ENCODE measurements at regions of chr17 and their contacts with region 1.

Region 1: GRCh38 chr17:34637548-34638525 is 58.5 kb downstream of the TMEM132E start:
- DNase-seq: peak; percentile 71 to 79
- H3K4me3 ChIP-seq: peak overlapping the region in 1 of 3 donors; percentile 7
- H3K27ac ChIP-seq: no peak overlapping the region
- H3K4me1 ChIP-seq: peaks cover 0 to 6% of the 10 kb centered on the region in 2 donors
- H3K27me3 ChIP-seq: peaks cover 9% of the 10 kb centered on the region
- CTCF ChIP-seq: peak; percentile 50 to 91 (median 72)
- POLR2A ChIP-seq: no peak

Region 2: GRCh38 chr17:34420254-34420766 is 217.5 kb before region 1 on chr17:
- intact Hi-C with region 1: loop called (anchors 5 kb)
- DNase-seq: peak; percentile 45 to 54
- H3K4me3 ChIP-seq: no peak overlapping the region
- H3K27ac ChIP-seq: no peak overlapping the region
- H3K4me1 ChIP-seq: no peaks in the 10 kb centered on the region
- H3K27me3 ChIP-seq: peaks cover 9% of the 10 kb centered on the region
- CTCF ChIP-seq: peak; percentile 70 to 91 (median 83)
- POLR2A ChIP-seq: no peak

Region 3: GRCh38 chr17:34542700-34543336 is 95.0 kb before region 1 on chr17:
- intact Hi-C with region 1: loop called (anchors 10 kb)
- DNase-seq: peak; percentile 25 to 26
- H3K4me3 ChIP-seq: no peak overlapping the region
- H3K27ac ChIP-seq: no peak overlapping the region
- H3K4me1 ChIP-seq: no peaks in the 10 kb centered on the region
- H3K27me3 ChIP-seq: no peaks in the 10 kb centered on the region
- CTCF ChIP-seq: peak; percentile 61 to 86 (median 70)
- POLR2A ChIP-seq: no peak